Ovary (tissue), 10 donors: ENCODE measurements at regions of chr3 and their contacts with region 1.

Region 1: GRCh38 chr3:32340039-32340438 is 51.6 kb upstream of the CMTM7 start:
- DNase-seq: no peak
- H3K4me3 ChIP-seq: no peak overlapping the region
- H3K27ac ChIP-seq: no peak overlapping the region
- H3K4me1 ChIP-seq: no peaks in the 10 kb centered on the region
- H3K27me3 ChIP-seq: no peaks in the 10 kb centered on the region
- CTCF ChIP-seq: no peak
- EP300 ChIP-seq: no peak
- POLR2A ChIP-seq: no peak

Region 2: DNA sequence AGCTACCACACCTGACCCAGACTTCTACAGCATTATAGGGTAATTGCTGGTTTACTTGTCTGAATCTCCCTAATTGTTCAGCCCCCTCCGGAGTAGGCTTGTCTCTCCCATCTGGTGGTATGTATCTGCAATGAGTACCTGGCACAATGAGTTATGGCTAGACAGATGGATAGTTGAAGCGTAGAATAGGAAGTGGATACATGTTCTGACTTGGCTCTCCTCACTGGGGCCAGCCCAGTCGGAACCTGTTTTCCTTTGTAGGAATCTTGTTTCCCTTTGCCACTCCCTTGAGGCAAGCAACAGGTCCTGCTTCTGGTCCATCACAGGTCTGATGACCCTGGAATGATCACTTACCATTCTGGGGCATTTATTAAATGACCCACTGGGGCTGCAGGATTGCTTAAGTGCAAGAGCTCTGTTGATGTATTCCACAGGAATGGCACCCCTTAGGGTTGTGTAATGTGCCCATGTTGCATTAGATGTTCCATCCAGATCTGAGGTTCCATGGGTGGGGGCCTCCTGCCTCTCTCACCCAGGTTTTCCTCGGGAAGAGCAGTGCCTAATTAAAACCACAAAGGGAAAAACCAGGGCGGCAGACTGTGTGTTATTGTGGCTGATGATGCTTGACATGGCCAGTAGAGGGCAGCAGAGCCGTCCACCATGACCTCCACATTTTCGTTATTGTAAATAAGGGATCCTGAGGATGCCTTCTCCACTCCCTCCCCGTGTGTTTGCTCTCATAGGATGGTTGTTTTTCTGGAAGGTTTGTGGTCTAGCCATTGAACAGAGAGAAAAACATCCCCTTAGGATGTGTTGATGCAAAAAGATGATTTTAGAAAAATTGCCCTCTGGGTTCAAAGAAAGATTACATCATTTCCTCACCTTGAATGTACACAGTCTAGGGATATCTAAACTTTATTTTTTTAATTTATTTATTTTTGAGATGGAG is 43.5 kb before region 1 on chr3:
- intact Hi-C with region 1: loop called in 1 of 4 experiments (anchors 10 kb)
- DNase-seq: peak; percentile 30 to 65 (median 53)
- H3K4me3 ChIP-seq: no peak overlapping the region
- H3K27ac ChIP-seq: no peak overlapping the region
- H3K4me1 ChIP-seq: no peaks in the 10 kb centered on the region
- H3K27me3 ChIP-seq: no peaks in the 10 kb centered on the region
- CTCF ChIP-seq: peak; percentile 53 to 67 (median 57)
- EP300 ChIP-seq: no peak
- POLR2A ChIP-seq: no peak

Region 3: GRCh38 chr3:33171580-33171979 is 831.5 kb after region 1 on chr3:
- intact Hi-C with region 1: no loop called
- DNase-seq: no peak
- H3K4me3 ChIP-seq: no peak overlapping the region
- H3K27ac ChIP-seq: no peak overlapping the region
- H3K4me1 ChIP-seq: peaks cover 7% of the 10 kb centered on the region
- H3K27me3 ChIP-seq: no peaks in the 10 kb centered on the region
- CTCF ChIP-seq: no peak
- EP300 ChIP-seq: no peak
- POLR2A ChIP-seq: no peak